ENCODE measurements at regions of chr1 and their contacts with region 1.

Region 1: GRCh38 chr1:17494114-17494729 is 45.3 kb upstream of the ARHGEF10L start:
- DNase-seq: peak; percentile 79
- ATAC-seq: peak; percentile 86 to 88
- H3K4me3 ChIP-seq: no peak overlapping the region
- H3K27ac ChIP-seq: no peak overlapping the region
- H3K4me1 ChIP-seq: no peaks in the 10 kb centered on the region
- H3K27me3 ChIP-seq: no peaks in the 10 kb centered on the region
- CTCF ChIP-seq: peak; percentile 93

Region 2: GRCh38 chr1:17587989-17588685 is 93.9 kb after region 1 on chr1:
- intact Hi-C with region 1: no loop called
- DNase-seq: peak; percentile 61
- ATAC-seq: peak; percentile 74 to 78
- H3K4me3 ChIP-seq: peak overlapping the region; percentile 17
- H3K27ac ChIP-seq: peak overlapping the region; percentile 70
- H3K4me1 ChIP-seq: peaks cover 43% of the 10 kb centered on the region
- H3K27me3 ChIP-seq: no peaks in the 10 kb centered on the region
- CTCF ChIP-seq: no peak

Region 3: DNA sequence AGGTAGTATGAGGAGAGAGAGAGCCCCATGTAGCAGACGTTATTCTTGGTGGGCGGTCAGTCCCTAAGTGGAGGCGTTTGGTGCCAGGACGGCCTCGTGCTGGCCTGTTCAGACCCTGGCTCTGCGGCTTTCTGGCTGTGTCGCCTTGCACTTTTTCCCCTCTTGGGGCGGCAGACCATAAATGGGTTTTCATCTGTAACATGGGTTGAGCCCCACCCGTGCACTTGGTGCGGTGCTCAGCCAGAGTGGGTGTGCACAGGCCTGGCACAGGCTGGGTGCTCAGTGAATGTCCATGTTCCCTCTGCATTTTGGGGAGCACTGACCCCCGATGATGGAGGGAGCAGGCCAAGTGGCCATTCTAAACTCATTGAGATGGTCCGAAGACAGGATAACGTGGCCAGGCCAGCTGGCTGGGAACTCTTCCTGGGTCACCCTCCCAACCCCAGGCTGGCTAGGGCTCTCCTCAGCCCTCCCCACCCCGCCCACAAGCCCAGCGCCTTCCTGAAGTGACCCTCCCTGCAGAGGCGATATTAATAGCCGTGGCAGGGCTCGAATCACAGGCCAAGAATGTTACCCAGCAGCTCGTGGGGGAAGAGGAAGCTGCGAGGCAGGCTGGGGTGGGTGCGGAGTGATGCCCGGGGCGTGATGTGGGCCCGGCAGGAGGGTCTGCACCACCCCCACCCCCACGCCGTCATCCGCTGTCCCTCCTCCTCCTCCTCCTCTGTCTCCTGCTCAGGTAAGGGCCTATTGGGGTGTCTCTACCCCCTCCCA is 123.8 kb after region 1 on chr1:
- intact Hi-C with region 1: loop called (anchors 10 kb)
- DNase-seq: peak; percentile 71
- ATAC-seq: peak; percentile 55 to 58
- H3K4me3 ChIP-seq: peak overlapping the region; percentile 50
- H3K27ac ChIP-seq: peak overlapping the region; percentile 49
- H3K4me1 ChIP-seq: peaks cover 10% of the 10 kb centered on the region
- H3K27me3 ChIP-seq: no peaks in the 10 kb centered on the region
- CTCF ChIP-seq: no peak

Measured in lower lobe of right lung (tissue), 2 donors.